ENCODE measurements at regions of chr19 and their contacts with region 1.

Region 1: DNA sequence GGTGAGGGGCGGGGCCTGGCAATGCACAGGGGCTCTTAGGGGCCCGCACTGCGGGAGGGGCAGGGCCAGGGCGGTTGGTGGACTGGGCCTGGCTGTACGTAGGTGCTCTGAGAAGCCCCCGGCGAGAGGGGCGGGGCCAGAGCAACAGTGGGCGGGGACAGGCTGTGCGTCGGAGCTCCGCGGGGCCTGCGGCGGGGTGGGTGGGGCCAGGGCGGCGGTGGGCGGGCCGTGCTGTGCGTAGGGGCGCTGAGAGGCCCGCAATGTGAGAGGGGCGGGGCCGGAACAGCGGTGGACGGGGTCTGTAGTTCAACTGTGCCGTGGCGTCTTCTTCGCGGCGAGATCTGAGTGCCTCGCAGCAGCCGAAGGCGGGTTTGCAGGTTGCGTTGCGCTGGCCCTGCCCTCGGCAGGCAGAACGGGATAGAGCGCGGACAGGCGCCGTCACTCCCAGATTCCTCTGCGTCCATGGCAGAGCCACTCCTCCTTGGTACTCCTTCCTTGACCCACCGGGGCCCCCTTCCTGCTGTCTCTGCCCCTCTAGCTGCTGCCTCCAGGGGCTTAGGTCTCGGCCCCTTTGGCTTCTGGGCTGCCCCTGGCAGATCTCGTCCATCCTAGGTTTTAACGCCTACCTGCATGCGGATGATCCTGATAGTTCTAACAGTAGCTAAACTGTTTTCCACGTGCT is 33.2 kb downstream of the CCNE1 start:
- DNase-seq: peak; percentile 96
- H3K4me3 ChIP-seq: peak overlapping the region; percentile 67
- H3K27ac ChIP-seq: peak overlapping the region; percentile 77
- H3K4me1 ChIP-seq: peaks cover 13% of the 10 kb centered on the region
- H3K27me3 ChIP-seq: no peaks in the 10 kb centered on the region
- CTCF ChIP-seq: no peak

Region 2: DNA sequence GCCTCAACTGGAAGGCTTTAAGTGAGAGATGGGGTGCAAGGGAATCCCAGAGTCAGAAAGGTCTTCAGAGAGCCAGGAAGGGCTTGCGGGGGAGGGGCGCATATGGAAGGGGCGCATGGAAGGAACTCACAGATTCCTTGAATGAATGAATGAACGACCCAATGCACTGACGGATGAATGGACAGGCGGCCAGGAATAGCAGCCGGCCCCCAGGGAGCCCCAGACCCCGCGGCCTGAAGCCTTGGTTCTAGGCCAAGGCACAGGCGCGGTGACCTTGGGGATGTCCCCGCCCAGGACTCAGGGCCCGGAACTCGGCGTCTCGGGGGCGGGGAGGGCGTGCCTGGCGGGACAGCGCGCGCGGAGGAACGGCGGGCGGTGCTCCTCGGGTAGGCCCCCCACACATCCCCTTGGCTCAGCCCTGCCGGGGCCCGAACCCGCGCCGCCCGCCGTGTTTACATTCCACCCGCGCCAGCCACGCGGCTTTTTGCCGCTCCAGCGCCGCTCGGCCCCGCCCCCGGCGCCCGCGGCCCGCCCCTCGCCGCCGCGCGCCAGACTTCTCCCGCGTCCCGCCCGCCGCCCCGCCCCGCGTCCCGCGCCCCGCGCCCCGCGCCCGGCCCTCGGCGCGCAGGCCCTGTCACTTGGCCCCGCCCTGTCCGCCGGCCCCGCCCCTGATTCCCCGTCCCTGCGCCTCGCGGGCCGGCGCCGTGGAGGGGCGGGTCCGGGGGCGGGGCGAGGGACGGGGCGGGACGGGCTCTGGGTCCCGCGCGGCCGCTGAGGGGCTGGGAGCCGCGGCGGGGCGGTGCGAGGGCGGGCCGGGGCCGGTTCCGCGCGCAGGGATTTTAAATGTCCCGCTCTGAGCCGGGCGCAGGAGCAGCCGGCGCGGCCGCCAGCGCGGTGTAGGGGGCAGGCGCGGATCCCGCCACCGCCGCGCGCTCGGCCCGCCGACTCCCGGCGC is 33.6 kb before region 1 on chr19 and contains the start of gene CCNE1:
- intact Hi-C with region 1: loop called (anchors 5 kb)
- DNase-seq: peak; percentile 96
- H3K4me3 ChIP-seq: peak within 1 kb of the TSS; percentile 62
- H3K27ac ChIP-seq: peak within 1 kb of the TSS; percentile 44
- H3K4me1 ChIP-seq: no peaks in the 10 kb centered on the region
- H3K27me3 ChIP-seq: no peaks in the 10 kb centered on the region
- CTCF ChIP-seq: no peak
- total RNA-seq, gene CCNE1: 5.1 to 10.6 TPM